ENCODE measurements at regions of chr19 and their contacts with region 1.

Region 1: DNA sequence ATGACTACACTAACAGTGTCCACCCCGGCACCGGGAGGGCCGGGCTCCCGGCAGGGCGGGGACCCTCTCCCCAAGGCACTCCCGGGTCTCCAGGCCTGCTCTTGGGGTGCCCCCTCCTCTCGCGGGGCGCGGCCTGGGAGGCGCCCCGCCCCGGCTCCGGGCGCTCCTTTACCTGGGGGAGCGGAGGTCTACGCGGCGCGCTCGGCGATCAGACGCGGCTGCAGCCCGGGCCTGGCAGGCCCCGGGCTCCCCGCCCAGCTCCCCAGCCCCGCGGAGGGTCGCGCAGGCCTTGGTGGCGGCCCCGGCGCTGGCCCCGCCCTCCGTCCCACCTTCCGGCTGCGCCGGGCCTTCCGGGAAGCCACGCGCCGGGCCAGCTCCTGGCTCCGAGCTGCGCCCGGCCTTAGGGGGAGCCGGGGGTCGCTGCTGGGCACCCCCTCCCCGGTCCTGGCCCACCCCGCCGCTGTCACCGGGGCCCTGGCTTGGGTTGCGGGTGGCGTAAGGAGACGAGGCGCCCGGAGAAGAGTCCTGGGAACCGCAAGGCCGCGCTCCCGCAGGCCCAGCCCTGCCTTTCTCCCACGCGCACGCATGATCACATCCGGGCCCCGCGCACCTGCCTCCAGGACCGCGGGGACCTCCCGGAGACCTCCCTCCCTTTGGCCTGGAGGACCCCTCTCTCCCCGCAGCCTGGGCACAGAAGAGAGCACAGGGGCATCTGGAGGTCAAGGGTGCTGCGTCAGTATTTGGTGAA is at the start of gene C19orf12:
- DNase-seq: peak; percentile 68 to 87 (median 79)
- ATAC-seq: peak; percentile 87
- H3K4me3 ChIP-seq: peak within 1 kb of the TSS; percentile 95
- H3K27ac ChIP-seq: peak within 1 kb of the TSS; percentile 83
- H3K4me1 ChIP-seq: peaks cover 7 to 31% of the 10 kb centered on the region in 2 experiments; a peak in 4 of 5 replicates
- H3K27me3 ChIP-seq: peaks cover 0 to 2% of the 10 kb centered on the region in 2 experiments; a peak in 2 of 5 replicates
- CTCF ChIP-seq: no peak
- EP300 ChIP-seq: no peak
- POLR2A ChIP-seq: peak; percentile 86
- RAD21 ChIP-seq: no peak
- polyA plus RNA-seq, gene C19orf12: 1.9 to 2.8 TPM

Region 2: DNA sequence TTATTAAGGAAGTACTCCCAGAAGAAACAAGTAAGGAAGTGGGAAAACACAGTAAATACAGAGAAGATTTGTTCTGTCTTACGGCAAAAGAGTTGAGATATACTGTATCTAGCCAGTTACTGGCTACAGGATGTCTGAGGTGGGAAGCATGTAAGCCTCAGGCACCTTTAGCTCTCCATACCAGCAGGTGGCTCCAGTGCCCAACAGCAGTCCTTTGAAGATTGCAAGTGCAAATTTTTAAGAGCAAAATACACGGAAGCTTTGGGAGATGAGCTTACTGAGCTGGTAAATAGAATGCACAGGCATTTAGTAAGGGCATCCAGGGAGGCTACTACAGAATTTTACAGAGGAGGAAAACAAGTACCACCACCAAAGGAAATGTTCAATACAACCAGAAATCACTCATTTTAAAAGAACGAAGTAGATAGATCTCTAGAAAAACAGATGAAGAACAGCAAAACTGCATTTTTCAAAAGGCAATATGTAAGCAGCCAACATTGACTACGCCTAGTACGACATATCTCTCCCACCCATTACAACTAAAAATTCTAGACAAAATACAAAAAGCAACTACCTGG is 247.2 kb before region 1 on chr19:
- CTCF ChIA-PET with region 1: no interaction called
- POLR2A ChIA-PET with region 1: no interaction called
- in situ Hi-C with region 1: no loop called
- intact Hi-C with region 1: loop called (anchors 5 kb)
- DNase-seq: peak in 2 of 4 experiments; percentile 44 to 54
- ATAC-seq: peak; percentile 93
- H3K4me3 ChIP-seq: no peak overlapping the region
- H3K27ac ChIP-seq: no peak overlapping the region
- H3K4me1 ChIP-seq: no peaks in the 10 kb centered on the region
- H3K27me3 ChIP-seq: no peaks in the 10 kb centered on the region
- CTCF ChIP-seq: peak; percentile 66 to 72 (median 69)
- EP300 ChIP-seq: no peak
- POLR2A ChIP-seq: no peak
- RAD21 ChIP-seq: peak; percentile 38 to 69

Region 3: GRCh38 chr19:29610563-29611271 is 104.4 kb before region 1 on chr19:
- CTCF ChIA-PET with region 1: interaction called, 10 read pairs
- POLR2A ChIA-PET with region 1: interaction called, 10 read pairs
- in situ Hi-C with region 1: no loop called
- intact Hi-C with region 1: loop called (anchors 1 kb)
- DNase-seq: peak; percentile 69 to 88 (median 78)
- ATAC-seq: peak; percentile 92
- H3K4me3 ChIP-seq: no peak overlapping the region
- H3K27ac ChIP-seq: no peak overlapping the region
- H3K4me1 ChIP-seq: peaks cover 0 to 10% of the 10 kb centered on the region in 2 experiments; a peak in 2 of 5 replicates
- H3K27me3 ChIP-seq: no peaks in the 10 kb centered on the region
- CTCF ChIP-seq: peak; percentile 90 to 94 (median 92)
- EP300 ChIP-seq: no peak
- POLR2A ChIP-seq: no peak
- RAD21 ChIP-seq: peak; percentile 97 to 99

Region 4: DNA sequence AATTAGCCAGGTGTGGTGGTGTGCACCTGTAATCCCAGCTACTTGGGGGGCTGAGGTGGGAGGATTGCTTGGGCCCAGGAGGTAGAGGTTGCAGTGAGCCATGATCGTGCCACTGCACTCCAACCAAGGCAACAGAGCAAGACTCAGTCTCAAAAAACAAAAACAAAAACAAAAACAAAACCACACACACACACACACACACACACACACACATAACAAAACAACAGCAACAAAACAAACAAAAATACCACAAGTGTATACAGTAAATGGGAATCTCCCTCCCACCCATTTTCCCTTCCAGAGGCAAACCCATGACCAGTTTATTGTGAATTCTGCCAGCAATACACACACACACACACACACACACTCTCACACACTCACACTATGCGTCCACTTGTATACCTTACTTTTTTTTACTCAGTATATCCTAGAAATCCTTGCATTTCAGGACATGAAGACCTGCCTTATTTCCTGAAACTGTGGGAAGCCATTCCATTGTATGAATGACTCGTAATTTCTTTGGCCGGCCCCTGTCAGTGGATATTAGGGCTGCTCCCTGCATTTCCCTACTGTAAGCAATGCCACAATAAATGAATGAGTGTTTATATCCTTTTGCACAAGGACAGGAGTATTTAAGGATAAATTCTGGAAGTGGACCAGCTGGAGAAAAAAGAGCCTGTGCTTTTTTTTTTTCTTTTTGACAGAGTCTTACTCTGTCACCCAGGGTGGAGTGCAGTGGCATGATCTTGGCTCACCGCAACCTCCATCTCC is 56.7 kb before region 1 on chr19:
- CTCF ChIA-PET with region 1: no interaction called
- POLR2A ChIA-PET with region 1: no interaction called
- in situ Hi-C with region 1: no loop called
- intact Hi-C with region 1: no loop called
- DNase-seq: no peak
- ATAC-seq: no peak
- H3K4me3 ChIP-seq: no peak overlapping the region
- H3K27ac ChIP-seq: no peak overlapping the region
- H3K4me1 ChIP-seq: peaks cover 16 to 29% of the 10 kb centered on the region in 2 experiments
- H3K27me3 ChIP-seq: no peaks in the 10 kb centered on the region
- CTCF ChIP-seq: no peak
- EP300 ChIP-seq: no peak
- POLR2A ChIP-seq: no peak
- RAD21 ChIP-seq: no peak

Region 5: DNA sequence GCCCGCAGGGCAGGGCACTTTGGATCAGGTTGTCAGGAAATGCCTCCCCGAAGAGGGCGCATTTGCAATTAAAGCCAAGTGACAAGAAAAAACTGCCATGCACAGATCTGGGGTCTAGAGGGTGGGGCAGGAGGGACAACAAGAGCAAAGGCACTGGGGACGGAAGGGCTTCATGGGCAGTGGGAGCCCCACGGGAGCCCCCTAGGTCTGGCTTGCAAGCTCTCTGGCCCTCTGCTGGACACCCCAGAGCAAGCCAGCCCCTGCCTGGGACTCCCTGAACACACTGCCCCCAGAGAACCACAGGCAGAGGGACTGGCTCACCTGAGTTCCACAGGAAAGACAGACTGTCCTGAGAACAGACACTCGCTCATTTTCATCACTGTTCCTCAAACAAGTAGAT is 30.1 kb after region 1 on chr19:
- CTCF ChIA-PET with region 1: no interaction called
- POLR2A ChIA-PET with region 1: no interaction called
- in situ Hi-C with region 1: no loop called
- intact Hi-C with region 1: no loop called
- DNase-seq: peak in 3 of 4 experiments; percentile 18 to 32 (median 30)
- ATAC-seq: peak; percentile 94
- H3K4me3 ChIP-seq: no peak overlapping the region
- H3K27ac ChIP-seq: no peak overlapping the region
- H3K4me1 ChIP-seq: no peaks in the 10 kb centered on the region
- H3K27me3 ChIP-seq: peaks cover 14 to 42% of the 10 kb centered on the region in 2 experiments; a peak in 4 of 5 replicates
- CTCF ChIP-seq: peak; percentile 55 to 83 (median 67)
- EP300 ChIP-seq: no peak
- POLR2A ChIP-seq: no peak
- RAD21 ChIP-seq: peak in 1 of 2 experiments; percentile 6; a peak in 1 of 4 replicates